IMR-90 (cell line): ENCODE measurements at regions of chr20 and their contacts with region 1.

Region 1: GRCh38 chr20:46520976-46521579 is 7.7 kb upstream of the ZNF334 start:
- DNase-seq: peak; percentile 64
- ATAC-seq: peak; percentile 98
- H3K4me3 ChIP-seq: no peak overlapping the region
- H3K27ac ChIP-seq: no peak overlapping the region
- H3K4me1 ChIP-seq: no peaks in the 10 kb centered on the region
- H3K27me3 ChIP-seq: no peaks in the 10 kb centered on the region
- CTCF ChIP-seq: peak; percentile 77
- POLR2A ChIP-seq: no peak
- RAD21 ChIP-seq: peak; percentile 91

Region 2: DNA sequence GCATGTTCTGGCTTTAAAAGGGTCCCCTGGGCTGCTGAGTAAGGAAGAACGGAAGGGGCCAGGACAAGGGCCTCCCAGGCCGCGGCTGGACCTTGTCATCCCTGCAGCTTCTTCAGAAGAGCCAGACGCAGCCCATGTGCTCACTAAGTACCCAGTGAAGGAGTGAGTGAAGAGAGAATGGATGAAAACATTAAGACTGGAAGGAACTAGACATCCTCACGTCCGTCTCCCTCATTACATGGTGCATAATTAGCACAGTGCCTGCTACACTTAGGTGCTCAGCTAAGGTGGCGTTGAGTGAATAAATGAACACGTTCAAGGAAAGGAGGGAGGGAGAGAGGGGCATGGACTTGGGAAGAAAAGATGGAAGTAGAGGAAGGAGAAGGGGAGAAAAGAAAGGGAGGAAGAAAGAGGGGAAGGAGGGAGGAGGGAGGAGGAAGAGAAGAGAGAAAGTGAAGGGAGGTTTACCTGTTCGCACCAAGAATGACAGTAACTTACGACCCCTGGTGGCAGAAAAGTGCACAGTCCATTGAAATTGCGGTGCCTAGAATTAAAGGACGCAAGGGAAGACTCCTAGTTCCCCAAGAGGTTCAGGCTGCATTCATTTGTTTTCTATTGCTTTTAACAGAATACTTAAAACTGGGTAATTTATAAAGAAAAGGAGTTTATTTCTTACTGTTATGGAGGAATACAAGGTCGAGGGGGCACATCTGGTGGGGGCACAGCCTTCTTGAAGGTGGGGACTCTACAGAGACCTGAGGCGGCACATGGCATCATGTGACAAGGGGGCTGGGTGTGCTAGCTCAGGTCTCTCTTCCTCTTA is 160.2 kb after region 1 on chr20:
- CTCF ChIA-PET with region 1: no interaction called
- POLR2A ChIA-PET with region 1: no interaction called
- dilution Hi-C with region 1: no loop called
- in situ Hi-C with region 1: loop called (anchors 5 kb)
- intact Hi-C with region 1: loop called (anchors 1 kb)
- DNase-seq: peak; percentile 44
- ATAC-seq: no peak
- H3K4me3 ChIP-seq: no peak overlapping the region
- H3K27ac ChIP-seq: no peak overlapping the region
- H3K4me1 ChIP-seq: peaks cover 10% of the 10 kb centered on the region
- H3K27me3 ChIP-seq: no peaks in the 10 kb centered on the region
- CTCF ChIP-seq: peak; percentile 72
- POLR2A ChIP-seq: no peak
- RAD21 ChIP-seq: peak; percentile 66

Region 3: GRCh38 chr20:46746956-46747526 is 226.0 kb after region 1 on chr20:
- CTCF ChIA-PET with region 1: no interaction called
- POLR2A ChIA-PET with region 1: no interaction called
- dilution Hi-C with region 1: no loop called
- in situ Hi-C with region 1: no loop called
- intact Hi-C with region 1: loop called (anchors 1 kb)
- DNase-seq: peak; percentile 71
- ATAC-seq: peak; percentile 72
- H3K4me3 ChIP-seq: no peak overlapping the region
- H3K27ac ChIP-seq: no peak overlapping the region
- H3K4me1 ChIP-seq: no peaks in the 10 kb centered on the region
- H3K27me3 ChIP-seq: no peaks in the 10 kb centered on the region
- CTCF ChIP-seq: no peak
- POLR2A ChIP-seq: no peak
- RAD21 ChIP-seq: no peak

Region 4: DNA sequence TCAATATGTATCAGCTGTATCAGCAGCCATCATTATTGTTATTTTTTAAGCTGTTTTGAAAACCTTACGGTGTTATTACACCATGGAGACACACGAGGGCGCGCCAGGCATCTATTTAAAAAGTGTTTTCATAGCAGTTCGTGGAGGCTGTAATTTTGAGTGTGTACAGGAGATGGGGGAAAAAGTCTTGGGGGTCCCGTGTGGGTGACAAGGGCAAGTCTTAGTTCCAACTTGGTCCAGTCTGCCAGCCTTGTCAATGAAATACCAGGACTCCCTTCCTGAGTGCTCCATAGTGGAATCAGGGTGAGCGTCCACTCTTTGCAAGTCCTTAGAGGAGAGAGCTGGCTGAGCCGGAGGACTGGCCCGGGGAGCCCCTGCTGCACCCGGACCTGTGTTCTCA is 231.7 kb after region 1 on chr20:
- CTCF ChIA-PET with region 1: no interaction called
- POLR2A ChIA-PET with region 1: no interaction called
- dilution Hi-C with region 1: no loop called
- in situ Hi-C with region 1: no loop called
- intact Hi-C with region 1: loop called (anchors 1 kb)
- DNase-seq: peak; percentile 62
- ATAC-seq: peak; percentile 85
- H3K4me3 ChIP-seq: no peak overlapping the region
- H3K27ac ChIP-seq: no peak overlapping the region
- H3K4me1 ChIP-seq: no peaks in the 10 kb centered on the region
- H3K27me3 ChIP-seq: no peaks in the 10 kb centered on the region
- CTCF ChIP-seq: peak; percentile 80
- POLR2A ChIP-seq: no peak
- RAD21 ChIP-seq: peak; percentile 75